CD8-positive, alpha-beta T cell (primary cell): ENCODE measurements at regions of chr19 and their contacts with region 1.

Region 1: DNA sequence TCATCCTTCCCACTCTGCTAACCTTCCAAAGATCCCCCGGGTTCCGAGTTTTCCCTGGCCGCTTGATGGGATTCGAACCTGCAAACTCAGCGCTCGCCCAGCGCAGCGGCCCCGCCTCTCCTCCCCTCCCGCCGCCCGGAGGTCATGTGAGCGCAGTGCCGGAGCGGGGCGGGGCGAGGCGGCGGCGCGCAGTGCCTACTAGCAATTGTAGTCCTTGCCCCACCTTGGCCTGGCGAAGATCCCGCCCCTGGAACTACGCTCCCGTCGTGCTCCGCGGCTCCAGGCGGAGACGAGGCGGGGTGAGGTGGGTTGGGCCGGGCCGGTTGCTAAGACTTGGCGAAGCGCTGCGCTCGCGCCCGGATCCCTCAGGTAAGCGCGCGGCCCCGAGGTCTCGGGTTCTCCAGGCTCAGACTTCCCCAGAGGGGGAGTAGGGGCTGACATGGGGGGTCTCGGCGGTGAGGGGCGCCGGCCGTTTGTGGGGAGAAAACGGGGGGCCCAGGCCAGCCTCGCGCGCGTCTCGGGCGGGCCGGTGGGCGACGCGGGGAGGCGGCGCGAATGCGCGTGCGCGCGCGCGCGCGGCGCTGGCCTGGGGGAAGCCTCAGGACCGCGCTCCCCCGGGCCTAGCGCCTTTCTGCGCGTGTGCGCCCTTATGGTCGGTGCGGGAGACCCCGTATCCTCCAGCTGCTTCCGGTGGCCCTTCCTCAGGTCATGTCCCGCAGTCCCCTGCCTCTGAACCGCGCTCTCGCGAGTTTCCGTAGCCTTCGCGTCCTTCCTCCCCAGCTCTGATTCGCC is at the starts of genes ADAT3 and SCAMP4:
- DNase-seq: peak; percentile 97 to 99 (median 98)
- ATAC-seq: peak; percentile 99
- H3K4me3 ChIP-seq: peak within 1 kb of the TSS; percentile 61 to 67
- H3K4me3 Mint-ChIP-seq: peak within 1 kb of the TSS; percentile 89
- H3K27ac ChIP-seq: peak within 1 kb of the TSS; percentile 54 to 81
- H3K27ac Mint-ChIP-seq: peak within 1 kb of the TSS; percentile 85
- H3K4me1 ChIP-seq: peaks cover 38% of the 10 kb centered on the region
- H3K4me1 Mint-ChIP-seq: peaks cover 34% of the 10 kb centered on the region
- H3K27me3 ChIP-seq: no peaks in the 10 kb centered on the region
- H3K27me3 Mint-ChIP-seq: no peaks in the 10 kb centered on the region
- CTCF ChIP-seq: no peak
- total RNA-seq, gene ADAT3: 6.4 to 7.3 TPM
- total RNA-seq, gene SCAMP4: 18.5 to 19.2 TPM

Region 2: GRCh38 chr19:1848399-1849131 is 56.7 kb before region 1 on chr19 and contains the start of gene REXO1:
- CTCF ChIA-PET with region 1: no interaction called
- POLR2A ChIA-PET with region 1: no interaction called
- intact Hi-C with region 1: loop called in 1 of 2 experiments (anchors 1 kb)
- DNase-seq: peak; percentile 96 to 99 (median 97)
- ATAC-seq: peak; percentile 76
- H3K4me3 ChIP-seq: peak within 1 kb of the TSS; percentile 86 to 90
- H3K4me3 Mint-ChIP-seq: peak within 1 kb of the TSS; percentile 88
- H3K27ac ChIP-seq: peak within 1 kb of the TSS; percentile 93 to 97
- H3K27ac Mint-ChIP-seq: peak within 1 kb of the TSS; percentile 93
- H3K4me1 ChIP-seq: peaks cover 72% of the 10 kb centered on the region
- H3K4me1 Mint-ChIP-seq: peaks cover 56% of the 10 kb centered on the region
- H3K27me3 ChIP-seq: no peaks in the 10 kb centered on the region
- H3K27me3 Mint-ChIP-seq: no peaks in the 10 kb centered on the region
- CTCF ChIP-seq: peak; percentile 91
- total RNA-seq, gene REXO1: 143 to 152 TPM

Region 3: GRCh38 chr19:1875646-1876495 is 29.4 kb before region 1 on chr19:
- CTCF ChIA-PET with region 1: no interaction called
- POLR2A ChIA-PET with region 1: interaction called, 6 read pairs
- intact Hi-C with region 1: loop called (anchors 1 kb)
- DNase-seq: peak; percentile 70 to 93 (median 87)
- ATAC-seq: peak; percentile 84
- H3K4me3 ChIP-seq: peak overlapping the region; percentile 82 to 98
- H3K4me3 Mint-ChIP-seq: peak overlapping the region; percentile 99
- H3K27ac ChIP-seq: peak overlapping the region; percentile 90 to 95
- H3K27ac Mint-ChIP-seq: peak overlapping the region; percentile 98
- H3K4me1 ChIP-seq: peaks cover 43% of the 10 kb centered on the region
- H3K4me1 Mint-ChIP-seq: peaks cover 31% of the 10 kb centered on the region
- H3K27me3 ChIP-seq: no peaks in the 10 kb centered on the region
- H3K27me3 Mint-ChIP-seq: no peaks in the 10 kb centered on the region
- CTCF ChIP-seq: no peak

Region 4: DNA sequence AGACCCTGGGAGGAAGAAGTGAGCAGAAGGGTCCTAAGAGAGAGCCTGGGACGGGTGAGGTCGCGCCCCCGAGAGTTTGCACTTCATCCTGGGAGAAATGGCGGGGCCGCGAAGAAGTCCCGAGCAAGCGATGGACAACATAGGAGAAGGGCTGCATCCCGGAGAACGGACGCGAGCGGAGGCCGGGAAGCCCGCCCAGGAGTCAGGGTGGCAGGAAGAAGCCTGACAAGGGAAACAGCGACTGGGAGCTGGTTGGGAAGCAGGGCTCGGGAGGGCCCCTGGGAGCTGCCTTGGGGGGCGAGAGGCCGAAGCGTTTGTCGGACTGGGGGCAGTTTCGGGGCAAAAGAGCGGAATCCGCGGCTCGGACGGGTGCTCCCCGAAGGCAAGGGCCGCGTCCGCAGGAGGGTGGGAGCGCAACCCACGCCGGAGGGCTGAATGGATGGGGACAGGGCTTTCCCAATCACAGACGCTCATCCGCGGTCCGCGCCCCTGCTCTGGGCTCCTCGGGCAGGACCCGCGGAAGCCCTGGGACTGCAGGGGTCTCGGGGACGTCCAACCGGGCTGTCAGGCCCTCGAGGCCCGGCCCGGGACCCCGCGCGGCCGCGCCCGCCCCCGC is 20.4 kb before region 1 on chr19:
- CTCF ChIA-PET with region 1: interaction called, 4 read pairs
- POLR2A ChIA-PET with region 1: no interaction called
- intact Hi-C with region 1: loop called (anchors 1 kb)
- DNase-seq: peak in 3 of 9 experiments; percentile 41 to 51 (median 48)
- ATAC-seq: no peak
- H3K4me3 ChIP-seq: peak overlapping the region; percentile 77 to 100
- H3K4me3 Mint-ChIP-seq: peak overlapping the region; percentile 100
- H3K27ac ChIP-seq: peak overlapping the region; percentile 92
- H3K27ac Mint-ChIP-seq: peak overlapping the region; percentile 99
- H3K4me1 ChIP-seq: peaks cover 40% of the 10 kb centered on the region
- H3K4me1 Mint-ChIP-seq: peaks cover 38% of the 10 kb centered on the region
- H3K27me3 ChIP-seq: no peaks in the 10 kb centered on the region
- H3K27me3 Mint-ChIP-seq: no peaks in the 10 kb centered on the region
- CTCF ChIP-seq: no peak

Region 5: DNA sequence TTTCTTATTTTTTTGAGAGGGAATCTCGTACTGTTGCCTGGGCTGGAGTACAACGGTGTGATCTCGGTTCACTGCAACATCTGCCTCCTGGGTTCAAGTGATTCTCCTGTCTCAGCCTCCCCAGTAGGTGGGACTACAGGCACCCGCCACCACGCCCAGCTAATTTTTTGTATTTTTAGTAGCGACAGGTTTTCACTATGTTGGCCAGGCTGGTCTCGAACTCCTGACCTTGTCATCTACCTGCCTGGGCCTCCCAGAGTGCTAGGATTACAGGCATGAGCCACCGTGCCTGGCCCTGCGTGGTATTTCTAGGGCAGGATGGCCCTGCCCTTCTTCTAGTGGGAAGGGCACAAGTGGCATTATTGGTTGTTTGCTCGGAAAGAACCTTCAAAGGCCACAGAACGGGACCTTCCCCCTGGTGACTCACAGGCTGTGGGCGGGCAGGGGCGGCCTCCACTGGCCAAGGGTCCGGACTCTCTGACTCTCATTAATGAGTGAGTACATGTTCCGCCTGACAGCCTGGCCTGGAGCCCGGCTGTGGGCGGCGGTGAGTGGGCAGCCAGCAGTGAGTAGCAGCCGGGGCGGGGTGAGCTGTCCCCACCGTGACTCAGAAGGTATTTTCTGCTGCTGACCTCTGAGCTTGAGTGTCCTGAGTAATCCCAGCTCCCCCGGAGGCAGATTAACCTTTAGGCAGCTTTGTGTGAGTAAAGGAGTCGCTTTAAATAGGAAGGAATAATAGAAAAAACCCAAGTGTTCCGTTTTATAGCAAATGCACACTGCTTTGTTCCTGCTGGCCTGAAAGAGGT is 263.6 kb after region 1 on chr19:
- CTCF ChIA-PET with region 1: no interaction called
- POLR2A ChIA-PET with region 1: no interaction called
- intact Hi-C with region 1: no loop called
- DNase-seq: peak in 8 of 9 experiments; percentile 15 to 79 (median 40)
- ATAC-seq: peak; percentile 4
- H3K4me3 ChIP-seq: no peak overlapping the region
- H3K4me3 Mint-ChIP-seq: no peak overlapping the region
- H3K27ac ChIP-seq: peak overlapping the region in 1 of 2 experiments; percentile 63
- H3K27ac Mint-ChIP-seq: peak overlapping the region; percentile 37
- H3K4me1 ChIP-seq: peaks cover 45% of the 10 kb centered on the region
- H3K4me1 Mint-ChIP-seq: peaks cover 43% of the 10 kb centered on the region
- H3K27me3 ChIP-seq: peaks cover 0 to 2% of the 10 kb centered on the region in 2 experiments
- H3K27me3 Mint-ChIP-seq: no peaks in the 10 kb centered on the region
- CTCF ChIP-seq: no peak